Left cardiac atrium (tissue), 4 donors: ENCODE measurements at regions of chr12 and their contacts with region 1.

Region 1: GRCh38 chr12:124036674-124037109 is 63.7 kb downstream of the ZNF664 start:
- DNase-seq: peak; percentile 43
- ATAC-seq: peak; percentile 38 to 56

Region 2: GRCh38 chr12:124240493-124240892 is 203.8 kb after region 1 on chr12:
- intact Hi-C with region 1: no loop called
- DNase-seq: no peak
- ATAC-seq: no peak

Region 3: DNA sequence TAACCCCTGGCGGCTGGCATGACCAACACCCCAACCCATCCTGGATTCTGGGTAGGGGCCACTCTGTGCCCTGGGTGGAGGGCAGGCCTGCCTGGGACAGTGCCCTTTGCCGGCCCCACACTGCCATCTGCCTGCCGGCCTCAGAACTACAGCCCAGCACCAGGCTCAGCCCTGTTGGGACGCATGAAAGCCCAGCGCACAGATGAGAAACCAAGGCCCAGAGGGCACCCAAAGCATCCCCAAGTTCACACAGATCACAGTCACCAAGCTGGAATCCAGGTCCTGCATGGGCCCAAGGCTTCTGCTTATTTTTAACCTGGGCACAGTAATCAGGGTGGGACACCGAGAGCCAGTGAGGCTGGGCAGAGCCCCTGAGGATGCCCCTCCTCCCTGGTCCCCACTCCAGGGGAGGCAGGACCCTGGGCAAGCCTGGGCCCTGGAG is 284.4 kb after region 1 on chr12:
- intact Hi-C with region 1: loop called in 1 of 2 experiments (anchors 5 kb)
- DNase-seq: peak; percentile 71
- ATAC-seq: peak; percentile 77 to 83